Caco-2 (cell line): ENCODE measurements at regions of chr11 and their contacts with region 1.

Region 1: GRCh38 chr11:12281571-12282478 is 95.5 kb upstream of the PARVA start:
- DNase-seq: peak; percentile 84 to 89
- H3K4me3 ChIP-seq: no peak overlapping the region
- H3K4me3 Mint-ChIP-seq: no peak overlapping the region
- H3K27ac Mint-ChIP-seq: peak overlapping the region; percentile 83
- H3K4me1 ChIP-seq: peaks cover 36% of the 10 kb centered on the region
- H3K4me1 Mint-ChIP-seq: peaks cover 39% of the 10 kb centered on the region
- H3K27me3 ChIP-seq: no peaks in the 10 kb centered on the region
- H3K27me3 Mint-ChIP-seq: no peaks in the 10 kb centered on the region
- CTCF ChIP-seq: peak; percentile 91 to 97

Region 2: DNA sequence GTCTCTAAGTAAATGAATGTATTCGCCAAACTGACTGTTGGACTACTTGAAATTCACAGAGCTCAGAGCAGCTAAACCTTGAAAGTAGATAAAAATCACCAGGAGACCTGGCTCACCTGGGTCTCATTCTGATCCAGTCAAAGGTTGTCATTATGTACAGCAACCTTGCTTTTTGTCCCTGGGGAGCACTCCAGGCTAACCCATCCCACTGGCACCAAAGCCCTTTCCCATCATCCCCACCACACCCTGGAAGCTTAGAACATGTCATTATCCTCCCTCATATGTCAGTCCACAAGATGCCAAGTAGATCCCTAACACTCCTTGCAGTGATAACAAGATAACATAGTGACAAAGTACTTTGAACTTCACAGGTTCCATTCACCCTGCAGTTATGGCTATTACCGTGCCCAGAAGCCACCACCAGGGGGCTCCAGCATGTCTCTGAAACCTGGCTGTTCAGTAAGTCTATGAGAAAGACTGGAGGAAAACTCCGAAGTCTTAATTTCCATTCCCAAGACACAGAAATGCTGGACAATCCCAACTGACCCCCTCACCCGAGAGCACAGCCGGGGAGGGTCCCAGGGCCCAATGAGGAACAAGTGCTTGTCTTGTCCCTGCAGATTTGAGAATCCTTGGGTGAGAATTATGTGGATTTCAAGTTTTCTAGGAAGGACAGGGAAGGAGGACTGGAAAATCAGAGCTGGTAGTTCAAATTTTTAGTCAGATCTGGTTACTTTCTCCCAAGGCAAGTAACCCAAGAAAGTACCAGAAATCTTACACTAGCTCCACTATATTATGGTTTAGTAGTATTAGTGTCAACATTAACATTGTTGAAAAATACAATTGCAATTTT is 483.0 kb before region 1 on chr11:
- CTCF ChIA-PET with region 1: no interaction called
- POLR2A ChIA-PET with region 1: no interaction called
- intact Hi-C with region 1: loop called (anchors 10 kb)
- DNase-seq: peak; percentile 83 to 89
- H3K4me3 ChIP-seq: no peak overlapping the region
- H3K4me3 Mint-ChIP-seq: no peak overlapping the region
- H3K27ac Mint-ChIP-seq: no peak overlapping the region
- H3K4me1 ChIP-seq: no peaks in the 10 kb centered on the region; the same call in 1 of the 2 replicates
- H3K4me1 Mint-ChIP-seq: no peaks in the 10 kb centered on the region
- H3K27me3 ChIP-seq: peaks cover 1% of the 10 kb centered on the region
- H3K27me3 Mint-ChIP-seq: peaks cover 6% of the 10 kb centered on the region
- CTCF ChIP-seq: peak; percentile 96

Region 3: GRCh38 chr11:11931461-11932055 is 350.3 kb before region 1 on chr11:
- CTCF ChIA-PET with region 1: no interaction called
- POLR2A ChIA-PET with region 1: no interaction called
- intact Hi-C with region 1: loop called (anchors 1 kb)
- DNase-seq: peak in 1 of 2 experiments; percentile 39
- H3K4me3 ChIP-seq: no peak overlapping the region
- H3K4me3 Mint-ChIP-seq: no peak overlapping the region
- H3K27ac Mint-ChIP-seq: no peak overlapping the region
- H3K4me1 ChIP-seq: no peaks in the 10 kb centered on the region
- H3K4me1 Mint-ChIP-seq: no peaks in the 10 kb centered on the region
- H3K27me3 ChIP-seq: no peaks in the 10 kb centered on the region
- H3K27me3 Mint-ChIP-seq: no peaks in the 10 kb centered on the region
- CTCF ChIP-seq: peak; percentile 56 to 65

Region 4: DNA sequence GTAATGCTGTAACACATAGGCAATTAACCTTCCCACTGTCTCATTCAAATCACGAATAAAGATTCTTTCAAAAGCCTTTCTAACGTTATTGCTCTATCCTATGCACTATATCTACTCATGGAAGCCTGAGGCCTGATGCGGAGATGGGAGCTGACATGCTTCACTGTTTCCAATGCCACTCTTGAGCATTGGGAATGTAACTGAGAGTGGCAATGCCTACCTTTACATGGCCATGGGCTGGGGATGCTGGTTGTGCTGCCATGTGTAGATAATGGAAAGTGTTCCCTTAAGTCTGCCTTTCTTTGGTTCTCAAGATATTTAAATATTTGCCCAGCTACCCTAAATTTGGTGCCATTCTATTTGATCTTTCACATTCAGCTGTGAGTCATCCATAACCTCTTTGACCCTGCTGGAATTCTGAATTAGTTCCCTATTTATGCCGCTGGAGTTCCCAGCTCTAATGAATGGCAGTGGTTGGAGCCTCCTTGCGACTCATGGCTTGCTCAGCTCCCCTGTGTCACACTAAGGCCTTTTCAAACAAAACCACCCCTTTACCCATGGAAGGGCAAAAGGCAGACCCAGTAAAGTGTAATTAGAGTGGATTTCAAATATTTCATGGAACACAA is 252.0 kb before region 1 on chr11:
- CTCF ChIA-PET with region 1: no interaction called
- POLR2A ChIA-PET with region 1: no interaction called
- intact Hi-C with region 1: no loop called
- DNase-seq: peak in 1 of 2 experiments; percentile 23
- H3K4me3 ChIP-seq: no peak overlapping the region
- H3K4me3 Mint-ChIP-seq: no peak overlapping the region
- H3K27ac Mint-ChIP-seq: peak overlapping the region; percentile 1
- H3K4me1 ChIP-seq: peaks cover 9% of the 10 kb centered on the region; the same call in 1 of the 2 replicates
- H3K4me1 Mint-ChIP-seq: peaks cover 19% of the 10 kb centered on the region
- H3K27me3 ChIP-seq: no peaks in the 10 kb centered on the region
- H3K27me3 Mint-ChIP-seq: no peaks in the 10 kb centered on the region
- CTCF ChIP-seq: no peak

Region 5: GRCh38 chr11:12087075-12088004 is 194.5 kb before region 1 on chr11:
- CTCF ChIA-PET with region 1: interaction called, 10 read pairs
- POLR2A ChIA-PET with region 1: no interaction called
- intact Hi-C with region 1: loop called (anchors 1 kb)
- DNase-seq: peak; percentile 34 to 42
- H3K4me3 ChIP-seq: no peak overlapping the region
- H3K4me3 Mint-ChIP-seq: no peak overlapping the region
- H3K27ac Mint-ChIP-seq: peak overlapping the region; percentile 78
- H3K4me1 ChIP-seq: peaks cover 73% of the 10 kb centered on the region
- H3K4me1 Mint-ChIP-seq: peaks cover 60% of the 10 kb centered on the region
- H3K27me3 ChIP-seq: no peaks in the 10 kb centered on the region
- H3K27me3 Mint-ChIP-seq: no peaks in the 10 kb centered on the region
- CTCF ChIP-seq: peak; percentile 7 to 11

Region 6: GRCh38 chr11:12110201-12110713 is 171.6 kb before region 1 on chr11 and contains the start of gene MICAL2:
- CTCF ChIA-PET with region 1: no interaction called
- POLR2A ChIA-PET with region 1: interaction called, 5 read pairs
- intact Hi-C with region 1: loop called (anchors 5 kb)
- DNase-seq: peak; percentile 90 to 96
- H3K4me3 ChIP-seq: peak within 1 kb of the TSS; percentile 61
- H3K4me3 Mint-ChIP-seq: peak within 1 kb of the TSS; percentile 83
- H3K27ac Mint-ChIP-seq: peak within 1 kb of the TSS; percentile 83
- H3K4me1 ChIP-seq: peaks cover 39% of the 10 kb centered on the region
- H3K4me1 Mint-ChIP-seq: peaks cover 38% of the 10 kb centered on the region
- H3K27me3 ChIP-seq: no peaks in the 10 kb centered on the region
- H3K27me3 Mint-ChIP-seq: no peaks in the 10 kb centered on the region
- CTCF ChIP-seq: no peak
- total RNA-seq, gene MICAL2: 247 and 272 TPM in 2 replicates

Region 7: DNA sequence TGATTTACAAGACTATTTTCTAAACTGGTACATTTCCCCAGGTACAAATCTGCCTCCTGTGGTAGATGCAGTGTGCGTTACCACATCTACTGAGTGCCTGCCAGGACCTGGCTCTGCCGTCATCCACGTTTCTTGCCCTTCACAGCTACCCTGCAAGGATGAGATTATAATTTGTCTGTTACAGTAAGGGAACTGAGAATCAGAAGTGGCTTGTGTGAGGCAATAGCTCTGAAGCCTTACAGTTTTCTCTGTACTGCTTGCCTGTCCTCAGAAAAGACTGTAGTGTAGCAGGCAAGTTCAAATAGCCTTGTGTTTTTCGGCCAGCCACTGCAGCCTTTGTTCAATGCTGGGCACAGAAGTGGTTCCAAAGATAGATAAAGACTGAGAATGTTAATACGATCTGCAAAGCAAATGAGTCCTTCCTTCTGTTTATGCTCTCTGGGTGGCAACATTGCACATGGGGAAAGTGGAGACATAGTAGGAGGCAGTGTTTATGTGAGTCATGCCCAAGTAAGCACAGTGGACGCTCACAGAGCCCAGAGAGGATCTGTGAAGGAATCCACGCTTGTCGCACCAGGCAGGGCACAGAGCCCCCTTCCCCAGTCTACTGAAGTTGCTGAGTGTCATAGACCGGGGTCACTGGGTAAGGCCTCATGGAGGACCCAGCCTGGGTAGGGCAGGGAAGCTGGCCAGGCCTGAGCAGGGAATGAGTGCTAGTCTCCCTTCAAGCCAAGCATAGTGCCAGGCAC is 122.3 kb before region 1 on chr11:
- CTCF ChIA-PET with region 1: no interaction called
- POLR2A ChIA-PET with region 1: no interaction called
- intact Hi-C with region 1: loop called (anchors 5 kb)
- DNase-seq: no peak
- H3K4me3 ChIP-seq: no peak overlapping the region
- H3K4me3 Mint-ChIP-seq: no peak overlapping the region
- H3K27ac Mint-ChIP-seq: peak overlapping the region; percentile 83
- H3K4me1 ChIP-seq: peaks cover 67% of the 10 kb centered on the region
- H3K4me1 Mint-ChIP-seq: peaks cover 63% of the 10 kb centered on the region
- H3K27me3 ChIP-seq: no peaks in the 10 kb centered on the region
- H3K27me3 Mint-ChIP-seq: no peaks in the 10 kb centered on the region
- CTCF ChIP-seq: no peak

Region 8: DNA sequence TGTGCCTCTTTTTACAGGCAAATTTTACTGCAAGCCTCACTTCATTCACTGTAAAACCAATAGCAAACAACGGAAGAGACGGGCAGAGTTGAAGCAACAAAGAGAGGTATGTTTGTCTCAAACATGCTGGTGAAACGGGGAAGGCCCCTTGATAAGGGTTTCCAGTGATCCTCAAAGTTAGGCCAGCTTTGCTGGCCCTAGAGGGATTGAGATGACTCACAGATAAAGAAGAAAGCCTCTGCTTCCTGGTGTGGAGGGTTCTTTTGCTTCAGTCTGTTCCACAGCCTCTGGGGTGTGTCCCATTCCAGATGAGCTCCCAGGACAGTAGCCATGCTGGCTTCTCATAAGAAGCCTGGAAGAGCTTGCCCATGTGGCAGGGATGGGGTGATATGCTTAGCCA is 23.4 kb before region 1 on chr11:
- CTCF ChIA-PET with region 1: interaction called, 13 read pairs
- POLR2A ChIA-PET with region 1: no interaction called
- intact Hi-C with region 1: loop called (anchors 2 kb)
- DNase-seq: peak; percentile 85 to 86
- H3K4me3 ChIP-seq: no peak overlapping the region
- H3K4me3 Mint-ChIP-seq: peak overlapping the region; percentile 42
- H3K27ac Mint-ChIP-seq: peak overlapping the region; percentile 96
- H3K4me1 ChIP-seq: peaks cover 67% of the 10 kb centered on the region
- H3K4me1 Mint-ChIP-seq: peaks cover 70% of the 10 kb centered on the region
- H3K27me3 ChIP-seq: no peaks in the 10 kb centered on the region
- H3K27me3 Mint-ChIP-seq: no peaks in the 10 kb centered on the region
- CTCF ChIP-seq: no peak